Heart left ventricle (tissue), 16 donors: ENCODE measurements at regions of chr15 and their contacts with region 1.

Region 1: DNA sequence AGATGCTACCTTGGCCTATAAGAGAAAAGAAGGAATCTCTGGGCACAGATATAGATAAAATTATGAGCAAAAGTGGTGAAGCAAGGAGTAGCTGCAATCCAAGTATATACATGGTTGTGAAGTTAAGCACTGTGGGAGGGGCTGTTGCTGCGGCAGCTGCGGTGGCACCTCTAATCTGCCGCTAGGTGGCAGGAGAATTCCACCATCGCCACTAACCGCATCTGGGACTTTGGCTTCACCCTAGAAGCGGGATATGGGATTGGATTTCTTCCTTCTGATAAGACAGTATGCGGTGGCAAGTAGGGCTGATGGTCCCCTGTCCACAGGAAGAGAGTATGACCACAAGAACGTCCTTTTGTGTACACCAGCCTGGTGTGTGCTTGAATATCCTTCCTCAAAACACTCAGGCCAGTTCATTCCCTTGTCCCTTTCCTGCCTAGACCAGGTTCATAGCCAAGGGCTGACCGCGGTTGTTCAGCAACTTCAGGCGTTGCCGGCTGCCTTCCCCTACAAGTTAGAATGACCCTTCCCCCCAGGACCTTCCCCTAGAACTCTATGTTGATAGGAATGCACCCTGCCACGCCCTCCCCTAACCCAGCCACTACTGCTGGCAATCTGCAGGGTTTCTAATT is 5.1 kb downstream of the MAGEL2 start:
- DNase-seq: peak in 4 of 5 donors; percentile 35 to 51 (median 49)
- ATAC-seq: peak in 3 of 4 donors; percentile 73 to 88 (median 76)
- H3K4me3 ChIP-seq: no peak overlapping the region
- H3K27ac ChIP-seq: no peak overlapping the region
- H3K4me1 ChIP-seq: peaks cover 0 to 6% (median 0%) of the 10 kb centered on the region in 12 donors
- H3K27me3 ChIP-seq: peaks cover 0 to 30% (median 6%) of the 10 kb centered on the region in 9 donors
- CTCF ChIP-seq: peak; percentile 66 to 88 (median 78)
- POLR2A ChIP-seq: no peak

Region 2: GRCh38 chr15:23565395-23566070 is 77.0 kb before region 1 on chr15 and contains the start of gene MKRN3:
- intact Hi-C with region 1: no loop called
- DNase-seq: no peak
- ATAC-seq: peak in 1 of 4 donors; percentile 20
- H3K4me3 ChIP-seq: peak within 1 kb of the TSS in 5 of 12 donors; percentile 16 to 49 (median 20)
- H3K27ac ChIP-seq: peak within 1 kb of the TSS in 1 of 12 donors; percentile 29
- H3K4me1 ChIP-seq: no peaks in the 10 kb centered on the region
- H3K27me3 ChIP-seq: peaks cover 0 to 13% (median 6%) of the 10 kb centered on the region in 9 donors
- CTCF ChIP-seq: no peak
- POLR2A ChIP-seq: no peak
- total RNA-seq, gene MKRN3: 0.13 to 0.45 (median 0.33) TPM in 3 of 9 donors, not detected in the others

Region 3: GRCh38 chr15:23629234-23629805 is 13.2 kb before region 1 on chr15:
- intact Hi-C with region 1: no loop called
- DNase-seq: no peak
- ATAC-seq: no peak
- H3K4me3 ChIP-seq: no peak overlapping the region
- H3K27ac ChIP-seq: no peak overlapping the region
- H3K4me1 ChIP-seq: no peaks in the 10 kb centered on the region
- H3K27me3 ChIP-seq: peaks cover 0 to 36% (median 5%) of the 10 kb centered on the region in 9 donors
- CTCF ChIP-seq: peak in 10 of 12 donors; percentile 6 to 51 (median 30)
- POLR2A ChIP-seq: no peak

Region 4: GRCh38 chr15:23690450-23690852 is 47.9 kb after region 1 on chr15:
- intact Hi-C with region 1: loop called in 1 of 10 experiments (anchors 5 kb)
- DNase-seq: peak; percentile 47 to 69 (median 57)
- ATAC-seq: peak; percentile 84 to 92 (median 85)
- H3K4me3 ChIP-seq: no peak overlapping the region
- H3K27ac ChIP-seq: peak overlapping the region in 1 of 12 donors; percentile 22
- H3K4me1 ChIP-seq: peaks cover 0 to 8% (median 0%) of the 10 kb centered on the region in 12 donors
- H3K27me3 ChIP-seq: no peaks in the 10 kb centered on the region
- CTCF ChIP-seq: no peak
- POLR2A ChIP-seq: no peak

Region 5: GRCh38 chr15:23857028-23857641 is 214.6 kb after region 1 on chr15:
- intact Hi-C with region 1: loop called in 6 of 10 experiments (anchors 5 to 10 kb)
- DNase-seq: peak in 2 of 5 donors; percentile 16 to 27
- ATAC-seq: no peak
- H3K4me3 ChIP-seq: no peak overlapping the region
- H3K27ac ChIP-seq: no peak overlapping the region
- H3K4me1 ChIP-seq: no peaks in the 10 kb centered on the region
- H3K27me3 ChIP-seq: peaks cover 0 to 4% (median 0%) of the 10 kb centered on the region in 9 donors
- CTCF ChIP-seq: peak in 9 of 12 donors; percentile 6 to 53 (median 24)
- POLR2A ChIP-seq: no peak

Region 6: DNA sequence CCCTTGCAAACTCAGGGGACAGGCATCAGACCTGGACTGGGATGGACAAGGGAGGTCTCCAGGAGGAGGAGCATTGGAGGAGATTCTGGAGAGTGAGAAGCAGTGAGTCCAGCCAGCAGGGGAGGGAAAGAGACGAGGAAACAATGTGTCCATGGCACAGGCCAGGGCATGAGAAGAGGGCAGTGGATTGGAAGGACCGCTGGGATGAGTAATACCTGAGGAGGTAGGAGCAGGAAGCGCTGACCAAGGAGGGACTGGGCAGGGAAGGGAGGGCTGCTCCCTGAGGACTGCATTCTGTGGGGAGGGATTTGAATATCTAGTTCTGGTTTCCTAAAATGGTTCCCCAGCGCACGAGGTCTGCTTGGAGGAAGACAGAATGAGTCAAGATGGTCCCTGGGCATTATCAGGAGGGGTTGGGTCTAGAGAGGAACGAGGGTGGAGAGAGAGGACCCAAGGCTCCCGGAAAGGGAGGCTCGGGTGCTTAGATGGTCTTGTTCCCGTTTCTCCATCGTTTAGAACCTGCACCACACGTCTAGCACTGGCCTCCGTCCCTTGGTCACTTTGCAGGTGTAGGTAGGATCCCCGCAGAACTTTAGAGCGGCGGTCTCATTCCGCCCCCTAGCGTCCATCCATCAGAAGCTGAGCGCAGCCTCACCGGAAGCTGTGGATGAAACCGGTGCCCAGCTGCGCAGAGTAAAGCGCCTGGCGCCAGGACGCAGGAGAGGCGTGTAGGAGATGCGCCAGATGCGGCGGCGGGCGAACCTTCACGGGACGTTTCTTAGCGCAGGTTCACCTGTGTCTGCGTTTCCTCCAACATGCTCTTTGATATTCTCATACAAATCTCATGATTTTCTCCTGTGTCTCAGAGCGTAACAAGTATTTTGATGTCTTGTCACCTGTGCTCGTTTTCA is 235.2 kb after region 1 on chr15:
- intact Hi-C with region 1: loop called in 7 of 10 experiments (anchors 5 kb)
- DNase-seq: peak in 3 of 5 donors; percentile 23 to 42 (median 34)
- ATAC-seq: peak; percentile 32 to 82 (median 64)
- H3K4me3 ChIP-seq: no peak overlapping the region
- H3K27ac ChIP-seq: no peak overlapping the region
- H3K4me1 ChIP-seq: no peaks in the 10 kb centered on the region
- H3K27me3 ChIP-seq: peaks cover 0 to 7% (median 0%) of the 10 kb centered on the region in 9 donors
- CTCF ChIP-seq: peak; percentile 38 to 62 (median 48)
- POLR2A ChIP-seq: no peak

Region 7: DNA sequence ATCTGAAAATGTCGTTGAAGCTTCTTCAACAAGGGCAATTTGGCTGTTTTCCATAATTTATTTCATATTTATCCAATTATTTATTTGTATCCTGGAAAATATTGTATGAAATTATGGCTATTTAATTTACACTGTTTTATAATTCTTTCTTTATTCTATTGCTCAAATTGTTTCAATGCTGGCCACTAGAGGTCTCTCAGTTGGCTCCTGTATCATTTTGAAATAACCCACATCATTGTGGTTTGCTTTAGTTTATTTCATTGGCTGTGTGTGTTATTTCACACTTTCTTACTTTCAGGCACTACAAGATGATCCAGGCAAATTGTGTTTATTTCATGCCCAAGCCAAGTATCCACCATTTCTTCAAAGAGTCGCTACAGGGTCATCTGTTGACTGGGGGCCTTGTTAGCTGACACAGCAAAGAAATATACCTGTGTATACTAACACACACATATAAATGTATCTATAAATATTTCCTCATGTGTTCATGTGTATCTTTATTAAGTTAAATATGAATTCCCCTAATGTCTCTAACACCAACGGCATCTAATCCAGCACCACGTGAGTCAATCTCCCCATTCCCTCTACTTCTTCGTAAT is 1119.3 kb after region 1 on chr15:
- intact Hi-C with region 1: loop called in 1 of 10 experiments (anchors 10 kb)
- DNase-seq: no peak
- ATAC-seq: no peak
- H3K4me3 ChIP-seq: no peak overlapping the region
- H3K27ac ChIP-seq: no peak overlapping the region
- H3K4me1 ChIP-seq: no peaks in the 10 kb centered on the region
- H3K27me3 ChIP-seq: peaks cover 0 to 6% (median 0%) of the 10 kb centered on the region in 9 donors
- CTCF ChIP-seq: peak in 11 of 12 donors; percentile 21 to 61 (median 41)
- POLR2A ChIP-seq: no peak

Region 8: DNA sequence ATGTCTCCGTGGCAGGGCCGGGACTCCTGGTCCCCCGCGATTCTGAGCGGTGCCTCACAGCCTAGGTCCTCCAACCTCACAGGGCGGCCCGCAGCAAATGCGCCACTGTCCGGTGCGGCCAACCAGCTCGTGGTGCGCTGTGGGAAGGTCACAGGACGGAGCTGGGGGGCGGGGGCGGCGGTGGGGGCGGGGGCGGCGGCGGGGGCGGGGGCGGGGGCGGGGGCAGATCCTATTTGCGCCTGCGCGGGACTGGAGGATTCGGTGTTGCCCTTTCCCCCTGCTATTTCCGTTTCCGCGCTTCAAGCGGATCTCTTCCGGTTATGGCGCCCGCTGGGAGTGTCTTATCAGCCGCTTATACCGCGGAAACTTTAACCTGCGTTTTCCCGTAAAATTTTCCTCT is 1205.5 kb after region 1 on chr15:
- intact Hi-C with region 1: loop called in 1 of 10 experiments (anchors 10 kb)
- DNase-seq: peak; percentile 37 to 68 (median 57)
- ATAC-seq: peak; percentile 83 to 90 (median 86)
- H3K4me3 ChIP-seq: peak overlapping the region in 10 of 12 donors; percentile 25 to 56 (median 40)
- H3K27ac ChIP-seq: peak overlapping the region in 8 of 12 donors; percentile 32 to 72 (median 57)
- H3K4me1 ChIP-seq: no peaks in the 10 kb centered on the region
- H3K27me3 ChIP-seq: no peaks in the 10 kb centered on the region
- CTCF ChIP-seq: no peak
- POLR2A ChIP-seq: no peak

Region 9: GRCh38 chr15:25501828-25502446 is 1859.4 kb after region 1 on chr15:
- intact Hi-C with region 1: loop called in 5 of 10 experiments (anchors 5 to 10 kb)
- DNase-seq: no peak
- ATAC-seq: peak in 2 of 4 donors; percentile 41 to 50
- H3K4me3 ChIP-seq: no peak overlapping the region
- H3K27ac ChIP-seq: no peak overlapping the region
- H3K4me1 ChIP-seq: peaks cover 0 to 2% (median 0%) of the 10 kb centered on the region in 12 donors
- H3K27me3 ChIP-seq: no peaks in the 10 kb centered on the region
- CTCF ChIP-seq: peak; percentile 45 to 76 (median 68)
- POLR2A ChIP-seq: no peak